Activated CD4-positive, alpha-beta memory T cell treated with anti-CD3 and anti-CD28 coated beads, Interleukin-2, amount 10 ng/mL, durations not matched to agents 7 days and 5 days (primary cell): ENCODE measurements at regions of chr1 and their contacts with region 1.

Region 1: DNA sequence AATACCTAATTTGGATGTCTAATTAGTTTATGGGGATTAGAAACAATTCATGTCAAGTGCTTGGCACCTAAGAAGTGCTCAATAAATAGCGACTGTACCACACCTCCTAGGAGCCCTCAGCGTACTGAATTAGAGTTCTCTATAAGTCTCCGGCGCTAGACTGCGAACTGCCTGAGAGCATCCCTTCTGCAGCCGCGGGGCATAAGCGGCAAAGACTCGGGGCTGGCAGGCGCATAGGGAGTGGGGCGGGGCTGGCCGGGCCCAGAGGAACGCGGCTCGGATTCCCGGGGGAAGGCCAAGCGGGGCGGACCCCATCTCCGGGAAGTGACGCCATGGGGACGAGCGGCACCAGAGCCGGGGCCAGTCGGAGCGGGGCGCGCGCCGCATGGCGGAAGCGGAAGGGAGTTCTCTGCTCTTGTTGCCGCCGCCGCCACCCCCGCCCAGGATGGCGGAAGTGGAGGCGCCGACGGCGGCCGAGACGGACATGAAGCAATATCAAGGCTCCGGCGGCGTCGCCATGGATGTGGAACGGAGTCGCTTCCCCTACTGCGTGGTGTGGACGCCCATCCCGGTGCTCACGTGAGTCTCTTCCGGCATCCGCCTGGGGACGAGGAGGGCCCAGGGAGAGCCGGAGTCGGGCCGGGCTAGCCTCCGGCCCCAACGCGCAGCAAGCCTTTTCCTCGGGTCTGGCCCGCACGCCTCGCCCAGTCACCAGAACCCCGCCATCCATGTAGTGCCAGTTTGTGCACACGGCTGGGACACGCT is at the start of gene TMEM222:
- DNase-seq: peak; percentile 98
- H3K4me3 Mint-ChIP-seq: peak within 1 kb of the TSS; percentile 96
- H3K27ac Mint-ChIP-seq: peak within 1 kb of the TSS; percentile 89
- H3K4me1 Mint-ChIP-seq: peaks cover 46% of the 10 kb centered on the region
- H3K27me3 Mint-ChIP-seq: peaks cover 4% of the 10 kb centered on the region
- total RNA-seq, gene TMEM222: 33.7 to 35.7 TPM

Region 2: DNA sequence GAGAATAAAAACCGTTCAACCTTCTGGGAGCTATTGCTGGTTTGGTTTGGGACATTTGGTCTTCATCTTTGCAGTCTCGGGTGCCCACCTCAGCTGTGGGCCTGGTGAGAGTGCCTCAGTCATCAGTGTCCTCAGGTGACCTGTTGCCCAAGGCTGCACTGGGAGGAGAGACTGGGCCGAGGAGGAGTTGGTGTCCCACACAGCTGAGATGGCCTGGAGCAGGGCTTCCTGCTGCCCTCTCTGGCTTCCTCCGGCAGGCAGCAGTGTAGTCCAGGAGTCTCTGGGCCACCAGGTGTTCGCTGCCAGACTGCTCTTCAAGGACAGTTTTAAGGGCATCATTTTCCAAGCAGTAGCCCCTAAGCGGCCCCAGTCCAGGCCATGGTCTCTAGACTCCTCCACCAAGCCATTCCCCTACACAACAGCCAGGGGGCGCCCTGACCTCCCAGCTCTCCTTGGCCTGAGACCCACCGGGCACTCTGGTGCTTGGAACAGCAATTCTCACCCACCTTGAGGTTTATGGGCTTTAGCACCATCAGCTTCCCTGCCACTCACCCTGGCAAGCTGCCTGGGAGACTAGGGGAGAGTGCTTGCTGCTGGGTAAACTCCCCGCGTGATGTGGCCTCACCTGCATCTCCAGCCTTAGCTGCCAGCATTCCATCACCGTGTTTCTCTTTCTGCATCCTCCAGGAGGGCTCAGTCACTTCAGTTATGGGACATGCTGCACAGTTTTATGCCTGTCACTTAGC is 10.7 kb after region 1 on chr1:
- CTCF ChIA-PET with region 1: interaction called, 25 read pairs
- POLR2A ChIA-PET with region 1: interaction called, 8 read pairs
- DNase-seq: peak; percentile 66
- H3K4me3 Mint-ChIP-seq: no peak overlapping the region
- H3K27ac Mint-ChIP-seq: peak overlapping the region; percentile 68
- H3K4me1 Mint-ChIP-seq: peaks cover 34% of the 10 kb centered on the region
- H3K27me3 Mint-ChIP-seq: no peaks in the 10 kb centered on the region

Region 3: GRCh38 chr1:27341525-27342252 is 19.7 kb after region 1 on chr1 and contains the start of gene SYTL1:
- CTCF ChIA-PET with region 1: interaction called, 5 read pairs
- POLR2A ChIA-PET with region 1: interaction called, 26 read pairs
- DNase-seq: peak; percentile 79
- H3K4me3 Mint-ChIP-seq: peak within 1 kb of the TSS; percentile 93
- H3K27ac Mint-ChIP-seq: peak within 1 kb of the TSS; percentile 95
- H3K4me1 Mint-ChIP-seq: peaks cover 46% of the 10 kb centered on the region
- H3K27me3 Mint-ChIP-seq: no peaks in the 10 kb centered on the region
- total RNA-seq, gene SYTL1: 124 to 136 TPM